ENCODE measurements at regions of chr1 and their contacts with region 1.

Region 1: GRCh38 chr1:10941891-10942541 is 70.4 kb upstream of the TARDBP start:
- DNase-seq: peak; percentile 50
- ATAC-seq: peak; percentile 60
- H3K4me3 Mint-ChIP-seq: no peak overlapping the region
- H3K27ac Mint-ChIP-seq: no peak overlapping the region
- H3K4me1 Mint-ChIP-seq: peaks cover 13% of the 10 kb centered on the region
- H3K27me3 Mint-ChIP-seq: peaks cover 35% of the 10 kb centered on the region
- CTCF ChIP-seq: peak; percentile 50

Region 2: DNA sequence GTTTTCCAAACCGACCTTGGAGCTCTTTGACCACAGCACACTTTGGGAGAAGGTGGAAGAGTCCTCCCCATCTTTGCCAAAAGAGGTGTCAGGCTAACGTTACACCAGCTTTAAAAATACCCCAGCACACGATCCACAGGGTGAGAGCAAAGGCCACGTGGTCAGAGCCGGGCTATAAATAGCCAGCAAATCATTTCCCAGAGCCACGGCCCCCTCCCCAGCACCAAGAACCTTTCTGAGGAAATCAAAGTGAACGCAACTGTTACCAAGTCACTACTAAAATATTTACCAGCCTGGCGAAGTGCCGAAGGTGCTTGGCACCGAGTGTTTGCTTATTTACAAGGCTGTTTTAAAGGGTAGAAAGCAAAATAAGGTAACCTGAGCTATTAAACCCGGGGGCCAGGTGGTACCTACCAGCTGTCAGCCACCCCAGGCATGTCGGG is 217.9 kb before region 1 on chr1:
- CTCF ChIA-PET with region 1: no interaction called
- POLR2A ChIA-PET with region 1: interaction called, 11 read pairs
- intact Hi-C with region 1: no loop called
- DNase-seq: no peak
- ATAC-seq: no peak
- H3K4me3 Mint-ChIP-seq: no peak overlapping the region
- H3K27ac Mint-ChIP-seq: no peak overlapping the region
- H3K4me1 Mint-ChIP-seq: no peaks in the 10 kb centered on the region
- H3K27me3 Mint-ChIP-seq: peaks cover 2% of the 10 kb centered on the region
- CTCF ChIP-seq: no peak

Measured in activated B cell treated with CpG ODN at 0.5 μM for 24 hours (primary cell).